ENCODE measurements at regions of chr11 and their contacts with region 1.

Region 1: GRCh38 chr11:93020248-93021046 is 51.0 kb downstream of the MTNR1B start:
- DNase-seq: peak; percentile 98
- H3K4me3 ChIP-seq: peak overlapping the region; percentile 6 to 30 (median 28)
- H3K27ac ChIP-seq: peak overlapping the region; percentile 98
- H3K4me1 ChIP-seq: peaks cover 34% of the 10 kb centered on the region
- H3K27me3 ChIP-seq: no peaks in the 10 kb centered on the region
- CTCF ChIP-seq: no peak

Region 2: GRCh38 chr11:92852946-92853345 is 167.5 kb before region 1 on chr11:
- CTCF ChIA-PET with region 1: no interaction called
- dilution Hi-C with region 1: no loop called
- in situ Hi-C with region 1: no loop called
- intact Hi-C with region 1: no loop called
- DNase-seq: peak; percentile 92
- H3K4me3 ChIP-seq: no peak overlapping the region
- H3K27ac ChIP-seq: no peak overlapping the region
- H3K4me1 ChIP-seq: peaks cover 16% of the 10 kb centered on the region
- H3K27me3 ChIP-seq: no peaks in the 10 kb centered on the region
- CTCF ChIP-seq: no peak

Region 3: GRCh38 chr11:92978271-92979111 is 42.0 kb before region 1 on chr11:
- CTCF ChIA-PET with region 1: no interaction called
- dilution Hi-C with region 1: no loop called
- in situ Hi-C with region 1: no loop called
- intact Hi-C with region 1: no loop called
- DNase-seq: peak; percentile 52
- H3K4me3 ChIP-seq: no peak overlapping the region
- H3K27ac ChIP-seq: peak overlapping the region; percentile 51
- H3K4me1 ChIP-seq: peaks cover 24% of the 10 kb centered on the region
- H3K27me3 ChIP-seq: no peaks in the 10 kb centered on the region
- CTCF ChIP-seq: no peak

Region 4: DNA sequence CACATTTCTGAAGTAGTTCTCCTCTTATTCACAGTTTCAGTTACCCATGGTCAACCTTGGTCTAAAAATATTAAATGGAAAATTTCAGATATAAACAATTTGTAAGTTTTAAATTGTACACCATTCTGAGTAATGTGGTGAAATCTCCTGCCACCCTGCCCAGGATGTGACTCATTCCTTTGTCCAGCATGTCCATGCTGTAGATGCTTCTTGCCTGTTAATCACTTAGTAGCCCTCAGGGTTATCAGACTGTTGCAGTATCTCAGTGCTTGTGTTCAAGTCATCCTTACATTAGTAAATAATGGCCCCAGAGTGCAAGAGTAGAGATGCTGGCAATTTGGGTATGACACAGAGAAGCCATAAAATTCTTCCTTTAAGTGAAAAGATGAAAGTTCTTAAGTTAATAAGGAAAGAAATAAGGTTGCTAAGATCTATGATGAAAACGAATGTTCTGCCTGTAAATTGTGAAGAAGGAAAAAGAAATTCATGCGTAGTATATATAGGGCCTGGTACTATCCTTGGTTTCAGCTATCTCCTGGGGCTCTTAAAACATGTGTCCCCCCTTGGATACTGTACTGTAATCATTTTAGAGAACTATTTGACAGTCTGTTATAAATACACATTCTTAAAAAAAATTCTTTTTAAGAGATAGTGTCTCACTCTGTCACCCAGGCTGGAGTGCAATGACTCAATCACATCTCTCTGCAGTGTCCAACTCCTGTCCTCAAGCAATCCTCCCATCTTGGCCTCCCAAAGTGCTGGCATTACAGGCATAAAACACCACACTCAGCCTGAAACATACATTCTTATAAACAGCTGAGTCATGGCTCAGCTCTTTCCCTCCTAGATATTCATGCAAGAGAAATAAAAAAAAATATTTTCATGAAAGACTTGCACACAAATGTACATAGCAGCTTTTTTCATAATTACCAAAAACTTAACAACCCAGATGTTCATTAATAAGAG is 19.7 kb before region 1 on chr11:
- CTCF ChIA-PET with region 1: no interaction called
- dilution Hi-C with region 1: no loop called
- in situ Hi-C with region 1: no loop called
- intact Hi-C with region 1: loop called (anchors 1 kb)
- DNase-seq: peak; percentile 90
- H3K4me3 ChIP-seq: no peak overlapping the region
- H3K27ac ChIP-seq: peak overlapping the region; percentile 89
- H3K4me1 ChIP-seq: peaks cover 25% of the 10 kb centered on the region
- H3K27me3 ChIP-seq: no peaks in the 10 kb centered on the region
- CTCF ChIP-seq: no peak

Region 5: DNA sequence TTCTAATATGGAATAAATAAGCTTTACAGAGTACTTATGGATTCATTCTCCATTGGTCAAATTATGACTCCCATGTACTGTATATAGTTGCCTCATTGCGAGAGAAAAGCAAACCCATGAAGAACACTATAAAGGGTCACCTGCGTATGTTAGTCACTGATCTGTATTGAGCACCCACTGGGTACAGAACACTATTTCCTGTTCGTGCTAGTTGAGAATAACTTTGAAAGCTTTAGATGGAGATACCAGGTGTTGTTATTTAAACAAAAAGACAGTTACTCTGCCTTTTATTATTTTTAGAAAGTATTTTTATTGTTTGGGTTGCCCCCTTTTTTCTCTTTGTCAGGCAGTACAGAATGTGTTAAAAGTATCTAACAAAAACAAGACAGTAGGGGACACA is 390.0 kb after region 1 on chr11:
- CTCF ChIA-PET with region 1: no interaction called
- dilution Hi-C with region 1: no loop called
- in situ Hi-C with region 1: no loop called
- intact Hi-C with region 1: no loop called
- DNase-seq: no peak
- H3K4me3 ChIP-seq: no peak overlapping the region
- H3K27ac ChIP-seq: no peak overlapping the region
- H3K4me1 ChIP-seq: no peaks in the 10 kb centered on the region
- H3K27me3 ChIP-seq: peaks cover 6% of the 10 kb centered on the region
- CTCF ChIP-seq: no peak